ENCODE measurements at regions of chr2 and their contacts with region 1.

Region 1: DNA sequence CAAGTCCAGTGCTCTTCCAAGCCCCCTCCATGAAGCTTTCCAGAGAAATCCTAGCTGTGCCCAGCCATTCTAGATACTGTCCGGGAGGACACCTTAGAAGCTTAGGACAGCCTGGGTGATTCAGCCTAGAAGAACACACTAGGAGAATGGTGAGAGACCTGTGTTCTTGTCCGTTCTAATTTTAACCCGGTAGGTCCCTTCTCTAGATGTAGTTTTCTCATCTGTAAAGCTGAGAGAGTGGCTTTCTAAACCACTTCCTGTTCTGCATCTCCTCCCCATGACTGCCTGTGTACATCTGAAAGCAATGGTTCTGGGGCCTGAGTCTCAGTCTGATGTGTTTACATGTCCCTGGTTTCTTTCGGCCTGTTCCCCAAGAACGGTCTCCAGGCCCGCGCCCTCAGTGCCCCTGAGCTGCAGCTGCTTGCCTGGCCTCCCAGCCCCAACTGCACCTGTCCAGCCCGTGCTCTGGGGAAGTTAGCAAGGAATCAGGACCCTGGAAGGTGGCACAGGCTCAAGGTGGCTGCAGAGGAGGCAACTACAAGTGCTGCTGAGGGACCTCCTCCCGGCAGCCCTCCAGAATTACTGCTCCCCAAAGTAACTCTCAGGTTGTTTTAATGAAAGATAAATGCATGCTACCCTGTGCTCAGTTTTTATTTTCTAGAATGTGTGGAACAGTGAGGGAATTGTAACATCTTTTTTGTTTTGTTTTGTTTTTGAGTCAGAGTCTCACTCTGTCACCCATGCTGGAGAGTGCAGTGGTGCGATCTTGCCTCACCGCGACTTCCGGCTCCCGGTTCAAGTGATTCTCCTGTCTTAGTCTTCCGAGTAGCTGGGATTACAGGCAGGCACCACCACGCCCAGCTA is 105.9 kb downstream of the LBH start:
- DNase-seq: peak; percentile 58 to 66 (median 64)
- H3K4me3 ChIP-seq: peak overlapping the region; percentile 10 to 61
- H3K4me3 Mint-ChIP-seq: peak overlapping the region; percentile 76 to 89 (median 82)
- H3K27ac ChIP-seq: peak overlapping the region; percentile 58
- H3K27ac Mint-ChIP-seq: peak overlapping the region; percentile 94 to 97 (median 96)
- H3K4me1 ChIP-seq: peaks cover 72% of the 10 kb centered on the region
- H3K4me1 Mint-ChIP-seq: peaks cover 63 to 74% (median 70%) of the 10 kb centered on the region in 4 donors
- H3K27me3 ChIP-seq: no peaks in the 10 kb centered on the region
- H3K27me3 Mint-ChIP-seq: no peaks in the 10 kb centered on the region

Region 2: DNA sequence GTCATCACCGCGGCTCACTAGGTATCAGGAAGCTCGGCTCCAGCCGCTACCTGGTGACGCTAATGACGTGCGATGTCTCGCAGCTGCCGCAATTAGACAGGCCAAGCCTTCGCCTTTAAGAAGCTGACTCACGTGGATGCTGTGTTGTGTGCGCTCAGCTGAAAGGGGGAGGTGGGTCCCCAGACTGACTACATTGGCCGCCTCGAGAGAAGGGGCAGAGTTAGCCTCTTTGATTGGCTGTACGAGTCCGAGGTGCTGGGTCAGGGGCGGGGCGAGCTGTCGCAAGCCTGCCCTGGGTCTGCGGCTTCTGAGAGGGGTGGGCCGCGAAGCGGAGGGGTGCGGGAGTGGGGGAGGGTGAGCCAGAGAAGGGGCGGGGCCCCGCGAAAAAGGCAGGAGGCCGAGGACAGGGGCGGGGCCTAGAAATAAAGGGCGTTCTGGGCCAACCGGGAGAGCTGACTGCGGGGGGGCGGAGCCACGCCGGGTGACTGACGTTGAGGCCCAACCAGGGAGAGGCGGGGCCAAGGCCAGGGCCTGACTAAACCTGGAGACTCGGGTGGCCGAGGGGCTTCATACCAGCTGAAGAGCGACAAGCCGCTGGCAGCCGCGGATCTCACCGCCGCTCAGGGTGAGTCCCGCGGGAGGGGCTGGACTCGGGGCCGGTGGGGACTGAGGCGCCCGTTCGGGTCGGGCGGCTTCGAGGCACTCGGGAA is 190.6 kb before region 1 on chr2 and contains the start of gene YPEL5:
- CTCF ChIA-PET with region 1: interaction called, 5 read pairs
- POLR2A ChIA-PET with region 1: interaction called, 16 read pairs
- intact Hi-C with region 1: loop called (anchors 1 kb)
- DNase-seq: peak; percentile 99 to 100 (median 100)
- H3K4me3 ChIP-seq: peak within 1 kb of the TSS; percentile 49 to 78
- H3K4me3 Mint-ChIP-seq: peak within 1 kb of the TSS; percentile 86 to 94 (median 88)
- H3K27ac ChIP-seq: peak within 1 kb of the TSS; percentile 99
- H3K27ac Mint-ChIP-seq: peak within 1 kb of the TSS; percentile 98 to 100 (median 100)
- H3K4me1 ChIP-seq: peaks cover 54% of the 10 kb centered on the region
- H3K4me1 Mint-ChIP-seq: peaks cover 36 to 73% (median 43%) of the 10 kb centered on the region in 4 donors
- H3K27me3 ChIP-seq: no peaks in the 10 kb centered on the region
- H3K27me3 Mint-ChIP-seq: no peaks in the 10 kb centered on the region
- total RNA-seq, gene YPEL5: 81.5 to 88.4 TPM

Region 3: DNA sequence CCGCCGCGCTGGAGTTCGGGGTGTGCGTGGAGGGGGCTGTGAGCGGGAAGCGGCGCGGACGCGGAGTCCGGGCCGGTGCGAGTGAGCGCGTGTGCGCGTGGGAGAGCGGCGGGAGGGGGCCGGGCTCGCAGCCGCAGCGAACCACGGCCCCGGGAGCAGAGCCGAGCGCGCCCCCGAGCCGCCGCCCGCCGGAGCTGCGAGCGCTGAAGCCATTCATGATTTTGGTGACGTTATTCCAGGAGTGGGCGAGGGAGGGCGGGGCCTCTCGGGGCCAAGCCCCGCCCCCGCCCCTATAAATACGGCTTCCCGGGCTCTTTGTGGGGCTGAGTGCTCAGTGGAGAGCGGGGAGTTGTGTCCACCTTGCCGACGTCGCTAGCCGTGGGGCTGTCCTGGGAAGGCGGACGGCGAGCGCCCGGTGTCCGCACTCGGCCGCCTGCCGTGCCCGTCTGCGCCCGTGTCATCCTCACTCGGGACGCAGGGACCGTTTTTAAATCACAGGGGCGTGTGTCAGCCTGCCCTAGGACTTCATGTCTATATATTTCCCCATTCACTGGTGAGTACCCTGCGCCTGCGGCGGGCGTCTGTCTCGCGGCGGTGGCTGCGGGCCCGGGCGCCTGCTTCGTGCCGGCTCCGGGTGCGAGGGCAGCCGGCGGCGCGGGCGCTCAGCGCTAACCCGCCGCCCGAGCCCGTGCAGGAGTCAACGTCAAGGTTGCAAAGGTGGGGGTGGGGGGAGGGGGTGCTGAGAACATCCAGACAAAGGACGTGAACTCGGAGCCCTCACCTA is 105.8 kb before region 1 on chr2 and contains the start of gene LBH:
- CTCF ChIA-PET with region 1: interaction called, 68 read pairs
- POLR2A ChIA-PET with region 1: interaction called, 264 read pairs
- intact Hi-C with region 1: loop called (anchors 2 kb)
- DNase-seq: peak; percentile 88 to 91 (median 89)
- H3K4me3 ChIP-seq: peak within 1 kb of the TSS; percentile 63 to 92
- H3K4me3 Mint-ChIP-seq: peak within 1 kb of the TSS; percentile 89 to 99 (median 96)
- H3K27ac ChIP-seq: peak within 1 kb of the TSS; percentile 93
- H3K27ac Mint-ChIP-seq: peak within 1 kb of the TSS; percentile 87 to 97 (median 91)
- H3K4me1 ChIP-seq: peaks cover 64% of the 10 kb centered on the region
- H3K4me1 Mint-ChIP-seq: peaks cover 36 to 76% (median 55%) of the 10 kb centered on the region in 4 donors
- H3K27me3 ChIP-seq: no peaks in the 10 kb centered on the region
- H3K27me3 Mint-ChIP-seq: no peaks in the 10 kb centered on the region
- total RNA-seq, gene LBH: 335 to 364 TPM

Region 4: DNA sequence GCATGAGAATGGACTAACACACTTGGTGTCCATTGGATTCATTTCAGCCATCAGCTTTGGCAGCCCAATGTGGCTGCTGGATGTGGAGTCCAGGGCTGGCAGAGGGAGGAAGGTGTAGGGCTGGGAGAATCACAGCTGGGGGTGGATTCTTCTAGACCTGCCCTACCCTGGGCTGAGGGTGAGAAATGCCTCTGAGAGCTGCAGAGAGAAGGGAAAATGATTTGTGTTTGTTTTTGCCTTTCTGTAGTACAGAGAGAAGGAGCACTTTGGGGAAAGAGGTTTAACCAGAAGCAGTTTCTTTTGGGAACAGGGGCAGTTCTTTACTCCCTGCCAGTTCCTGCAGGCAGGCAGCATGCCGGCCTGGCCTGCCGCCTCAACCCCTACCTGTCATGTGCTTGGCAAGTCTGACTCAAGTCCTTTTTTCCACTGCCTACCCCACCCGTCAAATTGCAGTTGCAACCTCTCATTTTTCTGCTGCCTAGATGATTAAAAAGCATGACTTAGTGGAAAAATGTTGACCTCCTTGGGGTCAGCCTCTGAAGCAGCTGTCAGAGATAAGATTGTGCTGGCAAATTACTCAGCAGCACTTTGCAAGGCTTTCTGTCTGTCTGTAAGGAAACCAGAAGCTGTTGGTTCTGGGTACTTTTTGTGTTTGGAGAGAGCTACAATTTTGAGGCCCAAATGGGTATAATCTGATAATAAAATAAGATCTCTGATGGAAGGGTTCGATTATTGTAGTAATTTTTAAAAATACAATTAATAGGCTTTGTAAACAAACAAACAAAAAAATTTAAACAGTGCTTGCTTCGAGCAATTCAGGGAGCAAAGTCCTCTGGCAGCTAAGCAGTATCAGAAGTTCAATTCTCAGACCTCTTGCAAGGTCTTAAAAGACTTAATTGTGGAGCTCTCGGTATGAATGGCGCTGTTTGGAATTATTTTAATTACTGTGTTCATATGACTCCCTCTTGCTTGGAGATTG is 84.2 kb before region 1 on chr2:
- CTCF ChIA-PET with region 1: interaction called, 15 read pairs
- POLR2A ChIA-PET with region 1: interaction called, 12 read pairs
- intact Hi-C with region 1: no loop called
- DNase-seq: peak in 4 of 5 donors; percentile 13 to 85 (median 25)
- H3K4me3 ChIP-seq: peak overlapping the region in 1 of 2 donors; percentile 17
- H3K4me3 Mint-ChIP-seq: peak overlapping the region in 7 of 8 donors; percentile 59 to 83 (median 76)
- H3K27ac ChIP-seq: peak overlapping the region; percentile 37
- H3K27ac Mint-ChIP-seq: peak overlapping the region; percentile 72 to 97 (median 93)
- H3K4me1 ChIP-seq: peaks cover 98% of the 10 kb centered on the region
- H3K4me1 Mint-ChIP-seq: peaks cover 63 to 99% (median 89%) of the 10 kb centered on the region in 4 donors
- H3K27me3 ChIP-seq: no peaks in the 10 kb centered on the region
- H3K27me3 Mint-ChIP-seq: no peaks in the 10 kb centered on the region

Region 5: DNA sequence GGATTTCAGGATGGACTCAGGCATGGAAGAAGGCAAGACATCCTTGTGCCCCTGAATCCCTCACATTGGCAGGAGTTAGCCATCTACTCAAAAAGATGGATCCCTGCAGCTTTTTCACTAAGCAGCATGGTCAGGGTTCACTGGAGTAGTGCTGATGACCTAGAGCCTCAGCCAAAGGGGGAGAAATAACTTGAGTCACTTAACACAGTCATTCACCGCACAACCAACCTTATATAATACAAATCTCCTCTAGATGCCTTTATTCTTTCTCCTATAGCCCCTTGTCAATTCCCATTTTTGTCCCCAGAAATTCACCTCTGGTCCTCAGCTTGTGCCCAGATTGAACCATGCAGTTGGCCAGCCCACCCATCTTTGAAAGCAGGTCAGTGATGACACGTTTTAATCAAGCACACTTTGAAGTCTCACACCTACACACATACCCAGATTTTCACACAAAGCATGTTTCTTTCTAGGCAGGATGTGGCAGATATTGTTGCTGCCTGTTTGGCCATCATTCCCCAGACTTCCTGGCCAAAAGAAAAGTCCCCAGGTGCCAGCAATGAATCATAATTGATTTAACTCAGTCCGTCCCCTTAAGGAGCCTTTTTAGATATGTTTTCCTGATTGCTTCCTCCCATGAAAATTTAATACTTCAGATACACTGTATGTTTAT is 21.7 kb before region 1 on chr2:
- CTCF ChIA-PET with region 1: interaction called, 5 read pairs
- POLR2A ChIA-PET with region 1: interaction called, 26 read pairs
- intact Hi-C with region 1: loop called (anchors 2 kb)
- DNase-seq: peak; percentile 25 to 56 (median 40)
- H3K4me3 ChIP-seq: peak overlapping the region in 1 of 2 donors; percentile 14
- H3K4me3 Mint-ChIP-seq: peak overlapping the region in 6 of 8 donors; percentile 43 to 82 (median 68)
- H3K27ac ChIP-seq: peak overlapping the region; percentile 16
- H3K27ac Mint-ChIP-seq: peak overlapping the region; percentile 69 to 94 (median 93)
- H3K4me1 ChIP-seq: peaks cover 31% of the 10 kb centered on the region
- H3K4me1 Mint-ChIP-seq: peaks cover 23 to 35% (median 29%) of the 10 kb centered on the region in 4 donors
- H3K27me3 ChIP-seq: no peaks in the 10 kb centered on the region
- H3K27me3 Mint-ChIP-seq: no peaks in the 10 kb centered on the region

Region 6: GRCh38 chr2:30421604-30422443 is 84.6 kb after region 1 on chr2:
- CTCF ChIA-PET with region 1: interaction called, 21 read pairs
- POLR2A ChIA-PET with region 1: interaction called, 34 read pairs
- intact Hi-C with region 1: loop called (anchors 1 kb)
- DNase-seq: peak in 4 of 5 donors; percentile 16 to 58 (median 26)
- H3K4me3 ChIP-seq: no peak overlapping the region
- H3K4me3 Mint-ChIP-seq: peak overlapping the region; percentile 23 to 74 (median 61)
- H3K27ac ChIP-seq: peak overlapping the region; percentile 40
- H3K27ac Mint-ChIP-seq: peak overlapping the region; percentile 68 to 93 (median 84)
- H3K4me1 ChIP-seq: peaks cover 33% of the 10 kb centered on the region
- H3K4me1 Mint-ChIP-seq: peaks cover 26 to 47% (median 31%) of the 10 kb centered on the region in 4 donors
- H3K27me3 ChIP-seq: no peaks in the 10 kb centered on the region
- H3K27me3 Mint-ChIP-seq: no peaks in the 10 kb centered on the region

Region 7: GRCh38 chr2:30472326-30472725 is 135.1 kb after region 1 on chr2:
- CTCF ChIA-PET with region 1: interaction called, 31 read pairs
- POLR2A ChIA-PET with region 1: interaction called, 13 read pairs
- intact Hi-C with region 1: loop called (anchors 10 kb)
- DNase-seq: no peak
- H3K4me3 ChIP-seq: no peak overlapping the region
- H3K4me3 Mint-ChIP-seq: no peak overlapping the region
- H3K27ac ChIP-seq: no peak overlapping the region
- H3K27ac Mint-ChIP-seq: peak overlapping the region in 1 of 7 donors; percentile 51
- H3K4me1 ChIP-seq: no peaks in the 10 kb centered on the region
- H3K4me1 Mint-ChIP-seq: peaks cover 12 to 17% (median 15%) of the 10 kb centered on the region in 4 donors
- H3K27me3 ChIP-seq: no peaks in the 10 kb centered on the region
- H3K27me3 Mint-ChIP-seq: no peaks in the 10 kb centered on the region

Measured in CD4-positive, alpha-beta memory T cell (primary cell).